ENCODE measurements at regions of chr2 and their contacts with region 1.

Region 1: GRCh38 chr2:121530212-121530705 is 421 bp upstream of the RNU4ATAC start:
- DNase-seq: peak; percentile 81
- H3K4me3 ChIP-seq: peak overlapping the region; percentile 54 to 90 (median 70)
- H3K27ac ChIP-seq: peak overlapping the region; percentile 98
- H3K4me1 ChIP-seq: peaks cover 60% of the 10 kb centered on the region
- H3K27me3 ChIP-seq: no peaks in the 10 kb centered on the region
- CTCF ChIP-seq: no peak

Region 2: DNA sequence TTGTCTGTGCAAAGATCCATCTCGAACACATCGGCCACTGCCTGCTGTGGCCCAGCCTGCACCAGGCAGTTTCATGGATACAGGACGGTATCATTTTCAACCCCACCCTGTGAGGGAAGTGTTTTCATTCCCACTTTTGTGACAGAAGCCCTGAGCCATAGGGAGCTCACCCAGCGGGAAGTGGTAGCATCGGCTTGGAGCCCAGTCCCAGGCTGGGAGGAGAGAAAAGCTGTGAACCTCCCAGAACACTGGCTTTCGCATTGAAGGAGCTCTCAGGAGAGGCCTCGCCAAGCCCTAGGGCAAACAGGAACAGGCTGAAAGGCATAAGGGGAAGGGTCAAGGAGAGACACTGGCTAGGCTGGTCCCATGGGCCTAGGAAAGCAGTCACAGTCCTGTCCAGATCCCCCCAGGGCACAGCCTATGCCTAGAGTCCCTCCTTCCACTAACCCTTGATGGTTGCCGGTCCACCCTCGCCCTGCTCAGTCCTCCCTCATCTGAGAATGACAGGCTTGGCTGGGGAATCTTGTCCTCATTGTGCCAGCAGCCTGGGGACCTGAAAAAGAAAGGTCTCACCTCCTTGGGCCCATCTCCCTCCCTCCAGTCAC is 411.2 kb before region 1 on chr2:
- CTCF ChIA-PET with region 1: no interaction called
- dilution Hi-C with region 1: no loop called
- in situ Hi-C with region 1: no loop called
- intact Hi-C with region 1: no loop called
- DNase-seq: no peak
- H3K4me3 ChIP-seq: no peak overlapping the region
- H3K27ac ChIP-seq: no peak overlapping the region
- H3K4me1 ChIP-seq: no peaks in the 10 kb centered on the region
- H3K27me3 ChIP-seq: no peaks in the 10 kb centered on the region
- CTCF ChIP-seq: no peak

Region 3: GRCh38 chr2:121136323-121136722 is 393.9 kb before region 1 on chr2:
- CTCF ChIA-PET with region 1: no interaction called
- dilution Hi-C with region 1: no loop called
- in situ Hi-C with region 1: no loop called
- intact Hi-C with region 1: no loop called
- DNase-seq: no peak
- H3K4me3 ChIP-seq: no peak overlapping the region
- H3K27ac ChIP-seq: no peak overlapping the region
- H3K4me1 ChIP-seq: peaks cover 6% of the 10 kb centered on the region
- H3K27me3 ChIP-seq: no peaks in the 10 kb centered on the region
- CTCF ChIP-seq: peak in 1 of 2 donors; percentile 6

Region 4: GRCh38 chr2:121400201-121400600 is 130.1 kb before region 1 on chr2:
- CTCF ChIA-PET with region 1: interaction called, 3 read pairs
- dilution Hi-C with region 1: no loop called
- in situ Hi-C with region 1: loop called in 1 of 2 experiments (anchors 10 kb)
- intact Hi-C with region 1: loop called (anchors 1 kb)
- DNase-seq: no peak
- H3K4me3 ChIP-seq: no peak overlapping the region
- H3K27ac ChIP-seq: no peak overlapping the region
- H3K4me1 ChIP-seq: no peaks in the 10 kb centered on the region
- H3K27me3 ChIP-seq: no peaks in the 10 kb centered on the region
- CTCF ChIP-seq: no peak

Region 5: GRCh38 chr2:121479882-121480522 is 50.3 kb before region 1 on chr2:
- CTCF ChIA-PET with region 1: no interaction called
- dilution Hi-C with region 1: loop called (anchors 5 kb)
- in situ Hi-C with region 1: no loop called
- intact Hi-C with region 1: loop called (anchors 5 kb)
- DNase-seq: peak; percentile 48
- H3K4me3 ChIP-seq: no peak overlapping the region
- H3K27ac ChIP-seq: peak overlapping the region; percentile 59
- H3K4me1 ChIP-seq: peaks cover 72% of the 10 kb centered on the region
- H3K27me3 ChIP-seq: no peaks in the 10 kb centered on the region
- CTCF ChIP-seq: peak; percentile 44 to 45

Region 6: GRCh38 chr2:121505005-121505404 is 25.3 kb before region 1 on chr2:
- CTCF ChIA-PET with region 1: no interaction called
- dilution Hi-C with region 1: no loop called
- in situ Hi-C with region 1: no loop called
- intact Hi-C with region 1: loop called (anchors 1 kb)
- DNase-seq: peak; percentile 99
- H3K4me3 ChIP-seq: peak overlapping the region in 2 of 3 experiments; percentile 25 to 31
- H3K27ac ChIP-seq: peak overlapping the region; percentile 99
- H3K4me1 ChIP-seq: peaks cover 55% of the 10 kb centered on the region
- H3K27me3 ChIP-seq: no peaks in the 10 kb centered on the region
- CTCF ChIP-seq: no peak

Region 7: DNA sequence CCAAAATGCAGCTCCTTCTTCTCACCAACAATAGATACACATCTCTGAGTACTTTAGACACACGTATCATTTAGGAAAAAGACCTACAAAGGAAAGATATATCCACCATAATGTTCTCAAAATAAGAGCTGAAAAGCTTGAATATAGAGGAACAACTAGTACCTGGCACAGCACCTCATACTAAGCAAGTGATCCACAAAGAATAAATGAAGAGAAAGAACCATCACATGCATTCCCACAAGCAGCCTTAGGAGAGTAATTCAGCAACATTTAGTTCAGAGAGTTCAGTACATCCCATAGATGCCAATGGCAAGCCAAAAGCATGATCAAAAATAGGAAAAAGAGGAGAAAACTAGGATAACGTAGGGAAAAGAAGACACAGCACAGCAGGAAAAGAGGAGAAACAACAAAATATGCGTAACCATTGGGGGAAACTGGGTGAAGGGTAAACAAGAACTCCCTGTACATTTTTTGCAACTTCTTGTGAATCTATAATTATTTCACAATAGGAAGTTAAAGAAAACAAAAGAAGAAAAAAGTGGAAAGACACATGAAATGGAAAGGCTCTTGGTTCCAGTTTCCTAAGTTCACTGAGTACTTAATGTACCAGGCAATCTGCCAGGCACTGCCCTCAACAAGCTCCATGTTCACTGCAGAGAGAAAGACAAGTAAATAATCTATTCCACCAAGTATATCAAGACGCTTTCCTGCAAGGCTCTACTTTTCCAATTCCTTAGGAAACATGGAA is 96.7 kb after region 1 on chr2:
- CTCF ChIA-PET with region 1: no interaction called
- dilution Hi-C with region 1: loop called (anchors 10 kb)
- in situ Hi-C with region 1: no loop called
- intact Hi-C with region 1: no loop called
- DNase-seq: no peak
- H3K4me3 ChIP-seq: no peak overlapping the region
- H3K27ac ChIP-seq: no peak overlapping the region
- H3K4me1 ChIP-seq: peaks cover 7% of the 10 kb centered on the region
- H3K27me3 ChIP-seq: no peaks in the 10 kb centered on the region
- CTCF ChIP-seq: no peak

Region 8: GRCh38 chr2:121689356-121689755 is 159.1 kb after region 1 on chr2:
- CTCF ChIA-PET with region 1: no interaction called
- dilution Hi-C with region 1: no loop called
- in situ Hi-C with region 1: no loop called
- intact Hi-C with region 1: loop called (anchors 1 kb)
- DNase-seq: no peak
- H3K4me3 ChIP-seq: no peak overlapping the region
- H3K27ac ChIP-seq: no peak overlapping the region
- H3K4me1 ChIP-seq: peaks cover 3% of the 10 kb centered on the region
- H3K27me3 ChIP-seq: no peaks in the 10 kb centered on the region
- CTCF ChIP-seq: peak; percentile 38 to 44

Region 9: DNA sequence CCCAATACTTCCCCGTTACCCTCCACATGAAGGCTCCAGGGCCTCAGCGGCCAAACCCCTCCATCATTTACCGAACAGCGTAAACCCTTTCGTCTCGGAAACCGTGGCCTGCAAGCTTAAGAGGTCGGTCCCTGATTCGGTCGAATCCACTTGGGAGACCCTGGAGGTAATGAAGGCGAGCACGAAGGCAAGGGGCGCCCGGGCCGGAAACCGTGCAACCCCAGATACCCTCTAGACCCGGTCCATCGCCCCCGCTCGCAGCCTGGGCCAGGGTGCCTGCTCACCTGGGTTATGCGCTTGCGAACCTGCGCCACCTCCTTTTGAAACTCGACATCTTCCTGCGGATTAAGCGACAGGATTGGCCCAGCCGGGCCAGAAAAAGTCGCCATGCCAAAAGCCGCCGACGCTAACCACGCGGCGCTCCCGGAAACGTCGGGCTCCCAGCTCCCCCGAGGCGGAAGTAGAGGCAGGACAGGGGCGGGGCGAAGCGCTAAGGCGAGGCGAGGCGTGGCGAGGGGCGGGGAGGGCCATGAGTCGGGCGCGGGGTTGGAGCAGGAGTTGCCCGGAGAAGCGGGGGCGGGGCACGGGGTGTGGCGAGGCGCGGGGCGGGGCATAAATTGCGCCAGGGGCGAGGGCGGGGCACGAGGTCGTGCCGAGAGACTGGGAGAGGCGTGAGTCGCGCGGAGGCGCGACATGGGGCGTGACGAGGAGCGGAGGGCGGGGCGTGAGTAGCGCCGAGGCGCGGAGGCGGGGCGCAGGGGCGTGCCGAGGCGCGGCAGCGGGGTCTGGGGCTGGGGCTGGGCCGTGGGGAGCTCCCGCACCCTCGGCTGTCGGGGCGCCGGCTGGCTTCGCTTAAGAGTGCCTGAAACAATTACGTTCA is 206.4 kb after region 1 on chr2 and contains the start of gene NIFK:
- CTCF ChIA-PET with region 1: no interaction called
- dilution Hi-C with region 1: no loop called
- in situ Hi-C with region 1: no loop called
- intact Hi-C with region 1: loop called (anchors 5 kb)
- DNase-seq: peak; percentile 98
- H3K4me3 ChIP-seq: peak within 1 kb of the TSS; percentile 90 to 96 (median 94)
- H3K27ac ChIP-seq: peak within 1 kb of the TSS; percentile 81
- H3K4me1 ChIP-seq: peaks cover 5% of the 10 kb centered on the region
- H3K27me3 ChIP-seq: no peaks in the 10 kb centered on the region
- CTCF ChIP-seq: no peak
- total RNA-seq, gene NIFK: 44.5 to 88.7 TPM